ENCODE measurements at regions of chr1 and their contacts with region 1.

Region 1: DNA sequence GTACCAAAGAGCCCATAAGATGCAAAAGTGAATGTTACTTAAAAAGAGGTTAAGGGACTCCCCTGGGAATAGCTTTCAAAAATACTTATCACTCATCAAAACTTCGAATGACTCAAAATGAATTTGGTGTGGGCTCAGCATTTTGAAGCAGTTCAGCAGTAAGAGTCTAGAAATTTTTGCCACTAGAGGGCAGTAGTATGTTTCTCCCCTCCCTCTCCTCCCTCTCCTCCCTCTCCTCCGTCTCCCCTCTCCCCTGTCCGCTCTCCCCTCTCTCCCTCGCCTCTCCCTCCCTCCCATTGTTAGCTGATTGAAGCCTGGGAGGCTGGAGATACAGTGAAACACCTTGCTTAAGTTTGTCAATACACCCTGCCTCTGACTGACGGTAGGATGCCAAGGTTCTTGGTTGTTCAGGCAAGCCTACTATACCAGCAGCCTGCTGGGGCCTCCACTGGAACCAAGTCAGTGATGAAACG is 70.8 kb upstream of the TENT5C start:
- DNase-seq: peak; percentile 41
- H3K4me3 Mint-ChIP-seq: no peak overlapping the region
- H3K27ac Mint-ChIP-seq: no peak overlapping the region
- H3K4me1 Mint-ChIP-seq: peaks cover 21% of the 10 kb centered on the region
- H3K27me3 Mint-ChIP-seq: peaks cover 5% of the 10 kb centered on the region

Region 2: GRCh38 chr1:117367047-117368018 is 167.7 kb before region 1 on chr1 and contains the start of gene MAN1A2:
- CTCF ChIA-PET with region 1: interaction called, 3 read pairs
- POLR2A ChIA-PET with region 1: interaction called, 3 read pairs
- intact Hi-C with region 1: loop called (anchors 2 kb)
- DNase-seq: peak; percentile 79
- H3K4me3 Mint-ChIP-seq: peak within 1 kb of the TSS; percentile 94
- H3K27ac Mint-ChIP-seq: peak within 1 kb of the TSS; percentile 96
- H3K4me1 Mint-ChIP-seq: peaks cover 50% of the 10 kb centered on the region
- H3K27me3 Mint-ChIP-seq: no peaks in the 10 kb centered on the region
- total RNA-seq, gene MAN1A2: 18.3 to 22.5 TPM

Region 3: DNA sequence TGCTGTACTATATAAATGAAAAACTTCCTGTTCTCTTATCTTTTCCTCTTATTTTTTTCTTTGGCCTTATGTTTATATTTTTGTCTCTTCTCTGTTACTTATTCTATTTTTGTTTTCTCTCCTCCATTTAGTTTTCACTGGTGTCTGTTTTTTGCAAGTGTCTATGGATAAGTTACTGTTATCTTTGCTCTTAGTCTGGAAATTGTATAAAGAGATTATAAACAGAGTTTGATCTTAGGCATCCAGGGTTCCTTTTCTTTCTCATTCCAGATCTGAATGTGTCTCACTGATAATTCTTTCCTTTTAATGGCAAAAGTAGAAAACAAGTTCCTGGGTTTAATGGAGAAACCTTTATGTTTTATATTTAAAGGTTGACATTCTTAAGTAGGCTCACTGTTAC is 133.3 kb before region 1 on chr1:
- CTCF ChIA-PET with region 1: no interaction called
- POLR2A ChIA-PET with region 1: no interaction called
- intact Hi-C with region 1: no loop called
- DNase-seq: no peak
- H3K4me3 Mint-ChIP-seq: no peak overlapping the region
- H3K27ac Mint-ChIP-seq: no peak overlapping the region
- H3K4me1 Mint-ChIP-seq: peaks cover 25% of the 10 kb centered on the region
- H3K27me3 Mint-ChIP-seq: no peaks in the 10 kb centered on the region

Region 4: DNA sequence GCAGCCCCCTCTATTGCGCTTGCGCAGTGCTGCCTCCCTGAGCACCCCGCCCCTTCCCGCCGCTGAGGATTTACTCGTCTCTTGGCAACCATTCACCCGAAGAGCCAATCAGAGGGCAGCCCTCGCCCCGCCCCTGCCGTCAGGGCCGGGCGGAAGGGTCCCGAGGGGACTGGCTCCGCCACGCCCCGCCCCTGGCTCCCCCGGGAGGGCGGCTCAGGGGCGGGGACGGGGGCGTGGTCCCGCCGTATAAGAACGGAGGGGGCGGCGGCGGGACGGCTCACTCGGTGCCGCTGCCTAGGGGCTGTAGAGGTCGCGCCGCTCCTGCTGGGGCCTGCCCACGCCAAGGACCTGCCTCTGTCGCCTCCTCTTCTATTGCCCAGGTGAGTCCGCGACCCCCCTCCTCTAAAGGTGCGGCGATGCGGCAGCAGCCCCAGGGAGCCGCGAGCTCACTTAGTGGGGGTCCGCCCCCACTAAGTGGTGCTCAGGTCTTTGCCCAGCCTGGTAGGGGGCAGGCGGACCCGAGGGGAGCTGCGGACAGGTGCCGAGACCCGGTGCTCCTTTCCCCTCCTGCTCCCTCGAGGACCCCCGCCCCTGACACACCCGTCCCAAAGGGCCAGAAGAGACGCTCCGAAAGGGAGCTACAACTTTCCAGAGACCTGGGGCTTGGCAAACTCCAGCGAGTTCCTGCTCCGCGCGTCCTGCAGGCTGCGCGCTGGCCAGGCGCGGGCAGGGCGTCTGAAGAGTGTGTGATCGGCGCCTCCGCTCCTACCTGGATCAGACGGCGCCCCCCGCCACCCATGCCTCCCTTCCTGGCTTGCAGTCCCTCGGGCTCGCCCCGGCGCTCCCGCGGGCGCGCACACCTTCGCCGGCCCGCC is 71.0 kb after region 1 on chr1 and contains the start of gene TENT5C:
- CTCF ChIA-PET with region 1: interaction called, 19 read pairs
- POLR2A ChIA-PET with region 1: interaction called, 5 read pairs
- intact Hi-C with region 1: loop called (anchors 1 kb)
- DNase-seq: peak; percentile 99
- H3K4me3 Mint-ChIP-seq: peak within 1 kb of the TSS; percentile 91
- H3K27ac Mint-ChIP-seq: peak within 1 kb of the TSS; percentile 94
- H3K4me1 Mint-ChIP-seq: peaks cover 41% of the 10 kb centered on the region
- H3K27me3 Mint-ChIP-seq: no peaks in the 10 kb centered on the region
- total RNA-seq, gene TENT5C: 13.8 to 14.0 TPM

Region 5: GRCh38 chr1:117654493-117655219 is 119.6 kb after region 1 on chr1:
- CTCF ChIA-PET with region 1: interaction called, 67 read pairs
- POLR2A ChIA-PET with region 1: interaction called, 4 read pairs
- intact Hi-C with region 1: no loop called
- DNase-seq: no peak
- H3K4me3 Mint-ChIP-seq: no peak overlapping the region
- H3K27ac Mint-ChIP-seq: peak overlapping the region; percentile 78
- H3K4me1 Mint-ChIP-seq: peaks cover 78% of the 10 kb centered on the region
- H3K27me3 Mint-ChIP-seq: peaks cover 2% of the 10 kb centered on the region

Region 6: GRCh38 chr1:117683571-117684285 is 148.7 kb after region 1 on chr1:
- CTCF ChIA-PET with region 1: interaction called, 14 read pairs
- POLR2A ChIA-PET with region 1: no interaction called
- intact Hi-C with region 1: no loop called
- DNase-seq: no peak
- H3K4me3 Mint-ChIP-seq: no peak overlapping the region
- H3K27ac Mint-ChIP-seq: no peak overlapping the region
- H3K4me1 Mint-ChIP-seq: no peaks in the 10 kb centered on the region
- H3K27me3 Mint-ChIP-seq: peaks cover 2% of the 10 kb centered on the region